MCF 10A (cell line): ENCODE measurements at regions of chr5 and their contacts with region 1.

Region 1: GRCh38 chr5:126124706-126125345 is 298.4 kb upstream of the GRAMD2B start:
- DNase-seq: peak; percentile 92
- H3K4me3 Mint-ChIP-seq: peak overlapping the region; percentile 30
- H3K27ac Mint-ChIP-seq: peak overlapping the region; percentile 71
- H3K4me1 Mint-ChIP-seq: peaks cover 46% of the 10 kb centered on the region
- H3K27me3 Mint-ChIP-seq: no peaks in the 10 kb centered on the region
- CTCF ChIP-seq: no peak

Region 2: GRCh38 chr5:125559296-125559695 is 565.5 kb before region 1 on chr5:
- CTCF ChIA-PET with region 1: no interaction called
- POLR2A ChIA-PET with region 1: no interaction called
- intact Hi-C with region 1: loop called (anchors 10 kb)
- DNase-seq: peak; percentile 88
- H3K4me3 Mint-ChIP-seq: peak overlapping the region; percentile 39
- H3K27ac Mint-ChIP-seq: peak overlapping the region; percentile 69
- H3K4me1 Mint-ChIP-seq: peaks cover 28% of the 10 kb centered on the region
- H3K27me3 Mint-ChIP-seq: no peaks in the 10 kb centered on the region
- CTCF ChIP-seq: no peak

Region 3: GRCh38 chr5:126178521-126178920 is 53.7 kb after region 1 on chr5:
- CTCF ChIA-PET with region 1: no interaction called
- POLR2A ChIA-PET with region 1: no interaction called
- intact Hi-C with region 1: no loop called
- DNase-seq: no peak
- H3K4me3 Mint-ChIP-seq: no peak overlapping the region
- H3K27ac Mint-ChIP-seq: no peak overlapping the region
- H3K4me1 Mint-ChIP-seq: no peaks in the 10 kb centered on the region
- H3K27me3 Mint-ChIP-seq: no peaks in the 10 kb centered on the region
- CTCF ChIP-seq: no peak